Cardiac septum (tissue), 1 donor: ENCODE measurements at regions of chr10 and their contacts with region 1.

Region 1: DNA sequence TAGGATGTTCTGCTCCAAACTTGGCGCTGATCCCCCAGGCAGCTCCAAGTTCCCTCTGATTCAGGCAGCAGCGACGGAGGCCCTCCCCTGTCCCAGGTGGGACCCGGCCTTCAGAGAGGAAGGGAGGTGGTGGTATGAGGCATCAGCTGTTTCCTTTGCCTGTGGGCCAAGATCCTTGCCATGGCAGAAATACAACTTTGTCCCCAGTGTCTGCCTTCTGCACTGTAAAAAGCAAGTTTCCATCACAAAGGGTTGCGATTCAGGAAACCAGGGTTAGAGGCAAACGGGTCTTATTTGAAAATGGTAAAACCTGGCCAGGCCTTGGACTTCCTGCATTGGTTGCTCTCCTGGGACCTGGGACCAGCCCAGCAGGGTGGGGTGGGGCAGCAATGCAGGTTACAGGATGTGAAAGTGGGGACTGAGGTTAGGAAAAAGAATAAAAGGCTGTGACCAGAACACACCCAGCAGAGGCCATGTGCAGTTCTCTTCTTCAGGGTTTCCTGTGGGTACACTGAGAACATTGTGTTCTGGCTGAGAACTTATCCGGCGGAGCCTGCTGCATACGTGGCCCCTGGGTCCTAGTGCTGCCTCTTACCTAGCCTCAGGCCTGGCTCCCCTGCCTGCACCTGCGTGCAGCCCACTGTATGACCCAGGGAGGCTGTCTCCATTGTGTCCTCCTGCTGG is 25.1 kb upstream of the DDIT4 start:
- DNase-seq: peak; percentile 90

Region 2: DNA sequence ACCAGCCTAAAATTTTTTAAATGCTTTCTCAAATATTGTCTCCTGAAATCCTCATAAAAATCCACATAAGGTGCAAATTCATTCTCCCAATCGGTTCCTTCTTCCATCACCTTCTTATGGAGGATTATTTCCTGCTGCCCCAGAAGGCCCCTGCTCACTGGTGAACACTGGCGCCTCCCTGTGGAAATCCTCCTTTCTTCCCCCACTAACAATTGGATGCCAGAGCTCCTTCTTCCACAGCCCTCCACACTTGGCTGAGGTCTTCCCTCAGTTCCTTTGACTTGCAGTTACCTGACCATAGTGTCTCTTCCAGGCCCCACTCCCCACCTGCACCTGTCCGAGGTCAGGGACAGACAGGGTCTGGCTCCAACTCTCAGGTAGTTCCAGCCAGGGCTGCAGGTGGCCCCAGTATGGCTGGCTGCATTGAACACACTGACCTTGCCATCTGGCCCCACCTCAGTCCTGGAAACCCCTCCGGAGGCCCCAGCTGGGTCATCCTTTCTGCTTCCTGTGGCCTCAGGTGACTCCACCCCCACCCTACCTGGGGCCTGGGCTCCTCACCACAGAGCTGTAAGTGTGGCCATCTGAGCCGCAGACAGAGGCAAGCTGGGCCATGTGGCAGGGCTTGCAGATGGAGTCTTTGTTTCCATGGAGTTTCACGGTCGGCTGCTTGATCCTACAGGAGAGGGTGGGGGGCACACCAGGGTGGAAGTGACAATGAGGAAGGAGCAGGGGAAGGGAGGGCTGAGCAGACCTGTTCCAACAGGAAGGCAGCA is 178.7 kb before region 1 on chr10:
- intact Hi-C with region 1: no loop called
- DNase-seq: no peak

Region 3: GRCh38 chr10:72173635-72174296 is 74.8 kb before region 1 on chr10:
- intact Hi-C with region 1: no loop called
- DNase-seq: no peak

Region 4: GRCh38 chr10:72319416-72320254 is 71.0 kb after region 1 on chr10:
- intact Hi-C with region 1: loop called (anchors 2 kb)
- DNase-seq: peak; percentile 97